ENCODE measurements at regions of chr6 and their contacts with region 1.

Region 1: DNA sequence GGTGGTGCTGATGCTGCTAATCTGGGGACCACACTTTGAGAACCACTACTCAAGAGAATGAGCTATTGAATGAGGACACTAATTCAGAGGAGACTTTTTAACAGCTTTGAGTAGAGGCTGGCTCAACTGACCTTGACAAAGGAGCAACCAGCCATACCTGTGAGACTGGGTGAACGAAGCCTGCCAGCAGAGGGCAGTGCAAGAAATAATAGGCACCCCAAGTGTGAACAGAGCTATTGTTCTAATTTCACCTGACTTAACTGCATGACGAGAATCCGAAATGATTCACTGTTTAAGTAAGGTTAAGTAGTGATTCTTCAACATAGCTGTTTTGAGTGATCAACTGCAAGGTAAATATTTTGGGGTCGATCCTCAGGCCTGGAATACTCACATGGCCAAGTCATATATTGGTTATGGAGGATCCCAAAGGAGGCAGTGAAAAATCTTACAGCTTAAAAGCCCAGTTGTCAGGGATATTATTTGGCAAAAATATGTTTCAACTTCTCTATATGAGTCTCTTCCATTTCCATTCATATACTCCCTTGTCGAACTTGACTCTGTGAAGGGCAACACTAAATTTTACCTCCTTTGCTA is 550.5 kb upstream of the MARCKS start:
- DNase-seq: peak; percentile 60
- H3K4me3 Mint-ChIP-seq: no peak overlapping the region
- H3K27ac Mint-ChIP-seq: no peak overlapping the region
- H3K4me1 Mint-ChIP-seq: no peaks in the 10 kb centered on the region
- H3K27me3 Mint-ChIP-seq: no peaks in the 10 kb centered on the region

Region 2: GRCh38 chr6:113317881-113318574 is 11.4 kb after region 1 on chr6:
- CTCF ChIA-PET with region 1: interaction called, 10 read pairs
- POLR2A ChIA-PET with region 1: no interaction called
- intact Hi-C with region 1: no loop called
- DNase-seq: no peak
- H3K4me3 Mint-ChIP-seq: no peak overlapping the region
- H3K27ac Mint-ChIP-seq: no peak overlapping the region
- H3K4me1 Mint-ChIP-seq: no peaks in the 10 kb centered on the region
- H3K27me3 Mint-ChIP-seq: no peaks in the 10 kb centered on the region

Region 3: GRCh38 chr6:113375950-113376846 is 69.5 kb after region 1 on chr6:
- CTCF ChIA-PET with region 1: no interaction called
- POLR2A ChIA-PET with region 1: no interaction called
- intact Hi-C with region 1: no loop called
- DNase-seq: no peak
- H3K4me3 Mint-ChIP-seq: no peak overlapping the region
- H3K27ac Mint-ChIP-seq: no peak overlapping the region
- H3K4me1 Mint-ChIP-seq: no peaks in the 10 kb centered on the region
- H3K27me3 Mint-ChIP-seq: no peaks in the 10 kb centered on the region